ENCODE measurements at regions of chr11 and their contacts with region 1.

Region 1: DNA sequence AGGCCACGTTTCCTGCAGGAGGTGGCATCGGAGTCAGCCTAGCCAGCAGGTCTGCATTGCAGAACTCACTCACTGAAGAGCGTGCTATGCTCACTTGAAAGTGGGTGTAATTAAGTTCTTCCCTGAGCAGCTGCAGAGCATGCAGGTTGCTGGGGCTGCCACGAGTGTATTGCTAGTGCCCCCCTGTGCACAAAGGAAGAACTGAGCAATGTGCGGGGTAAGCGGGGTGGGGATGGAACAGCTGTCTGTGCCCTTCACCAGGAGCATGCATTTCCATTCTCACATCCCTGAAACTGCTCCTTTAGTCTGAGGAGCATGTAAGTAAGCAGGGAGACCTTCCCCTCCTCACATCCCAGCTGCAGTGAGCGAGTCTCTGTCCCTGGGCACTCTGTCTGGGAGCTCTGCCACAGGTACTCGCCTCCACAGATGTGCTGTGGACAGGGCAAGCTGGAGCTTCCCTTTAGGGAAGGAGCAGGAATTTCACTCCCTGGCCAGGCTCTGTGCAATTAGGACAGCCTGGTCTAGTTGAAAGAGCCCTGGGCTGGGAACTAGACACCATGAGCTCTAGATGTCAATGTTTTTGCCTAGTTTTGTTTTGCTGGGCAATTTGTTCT is 1031.8 kb downstream of the NTM start:
- DNase-seq: no peak

Region 2: DNA sequence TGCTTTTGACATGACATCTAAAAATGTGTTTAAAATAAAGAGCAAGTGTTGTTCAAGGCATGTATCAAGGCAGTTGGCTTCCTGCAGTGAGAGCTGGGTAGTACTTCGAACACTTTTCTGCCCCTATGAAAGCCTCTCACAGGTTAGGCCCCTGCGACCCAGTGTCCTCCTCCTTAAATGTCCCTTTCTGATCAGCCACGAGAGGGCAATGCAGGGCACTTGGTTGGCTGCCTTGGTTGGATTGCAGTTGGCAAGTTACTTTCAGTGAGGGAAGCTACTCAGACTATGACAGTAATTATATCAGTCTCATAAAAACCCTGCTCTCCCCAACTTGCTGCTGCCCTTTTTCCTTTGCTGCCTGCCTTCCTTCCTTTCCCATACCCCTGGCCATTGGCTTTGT is 288.0 kb before region 1 on chr11:
- intact Hi-C with region 1: loop called (anchors 5 kb)
- DNase-seq: no peak

Region 3: GRCh38 chr11:132644520-132645239 is 242.5 kb after region 1 on chr11:
- intact Hi-C with region 1: no loop called
- DNase-seq: no peak